ENCODE measurements at regions of chr15 and their contacts with region 1.

Region 1: GRCh38 chr15:89964232-89964954 is 36.7 kb upstream of the ZNF710 start:
- DNase-seq: no peak
- ATAC-seq: no peak
- H3K4me3 ChIP-seq: no peak overlapping the region
- H3K27ac ChIP-seq: no peak overlapping the region
- H3K4me1 ChIP-seq: no peaks in the 10 kb centered on the region
- H3K27me3 ChIP-seq: no peaks in the 10 kb centered on the region; a peak in 1 of 5 replicates
- CTCF ChIP-seq: no peak
- EP300 ChIP-seq: no peak
- POLR2A ChIP-seq: no peak
- RAD21 ChIP-seq: no peak

Region 2: GRCh38 chr15:89926158-89926557 is 38.2 kb before region 1 on chr15:
- CTCF ChIA-PET with region 1: no interaction called
- POLR2A ChIA-PET with region 1: no interaction called
- in situ Hi-C with region 1: no loop called
- intact Hi-C with region 1: loop called (anchors 5 kb)
- DNase-seq: no peak
- ATAC-seq: no peak
- H3K4me3 ChIP-seq: no peak overlapping the region
- H3K27ac ChIP-seq: no peak overlapping the region
- H3K4me1 ChIP-seq: no peaks in the 10 kb centered on the region; a peak in 1 of 5 replicates
- H3K27me3 ChIP-seq: peaks cover 5 to 21% of the 10 kb centered on the region in 2 experiments; a peak in 3 of 5 replicates
- CTCF ChIP-seq: no peak
- EP300 ChIP-seq: no peak
- POLR2A ChIP-seq: no peak
- RAD21 ChIP-seq: no peak

Measured in K562 (cell line).